Prostate gland (tissue), 2 donors: ENCODE measurements at regions of chr16 and their contacts with region 1.

Region 1: DNA sequence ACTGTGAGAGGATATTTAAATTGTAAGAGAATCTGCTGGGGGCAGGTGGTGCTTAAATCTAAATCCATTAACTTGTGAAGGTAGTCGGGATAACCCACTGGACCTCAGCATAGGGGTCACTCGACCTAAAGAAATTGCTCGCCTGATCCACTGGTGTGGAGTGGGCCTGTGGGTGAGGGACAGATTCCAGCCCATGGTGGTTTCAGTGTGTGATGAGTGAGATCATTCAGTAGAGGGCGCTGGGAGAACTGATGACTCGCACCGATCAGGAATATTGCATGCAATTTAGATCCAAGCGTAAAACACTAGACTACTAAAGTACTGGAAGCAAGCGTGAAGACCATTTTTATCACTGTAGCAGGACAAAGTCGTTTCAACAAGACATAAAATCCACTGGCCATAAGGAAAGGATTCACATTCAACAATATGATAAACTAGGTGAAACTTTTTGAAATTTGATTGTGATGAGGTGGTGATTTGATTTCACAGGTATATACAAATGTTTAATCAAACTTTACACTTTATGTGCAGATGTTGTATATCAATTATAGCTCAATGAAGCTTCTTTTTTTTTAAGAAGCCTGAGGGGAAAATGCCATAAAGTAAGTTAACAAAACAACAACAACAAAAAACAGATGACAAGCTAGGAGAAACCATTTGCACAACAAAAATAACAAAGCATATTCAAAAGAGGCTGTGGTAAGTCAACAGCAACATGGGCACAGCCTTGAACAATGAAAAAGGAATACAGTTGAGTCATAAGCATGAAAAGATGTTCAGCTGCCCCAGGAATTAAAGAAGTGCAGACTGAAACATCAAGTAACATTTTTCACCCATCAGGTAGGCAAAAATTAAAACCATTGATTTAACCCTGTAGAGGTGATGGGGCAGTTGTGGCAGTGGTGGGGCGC is 7.5 kb upstream of the TMEM170A start:
- DNase-seq: peak; percentile 67
- H3K4me3 ChIP-seq: no peak overlapping the region
- H3K27ac ChIP-seq: no peak overlapping the region
- H3K4me1 ChIP-seq: no peaks in the 10 kb centered on the region
- H3K27me3 ChIP-seq: no peaks in the 10 kb centered on the region
- CTCF ChIP-seq: peak; percentile 25 to 81 (median 62)
- POLR2A ChIP-seq: no peak

Region 2: GRCh38 chr16:75305364-75306098 is 166.4 kb before region 1 on chr16:
- intact Hi-C with region 1: no loop called
- DNase-seq: peak; percentile 90
- H3K4me3 ChIP-seq: no peak overlapping the region
- H3K27ac ChIP-seq: peak overlapping the region; percentile 78 to 85
- H3K4me1 ChIP-seq: peaks cover 14% of the 10 kb centered on the region
- H3K27me3 ChIP-seq: no peaks in the 10 kb centered on the region
- CTCF ChIP-seq: no peak
- POLR2A ChIP-seq: no peak

Region 3: DNA sequence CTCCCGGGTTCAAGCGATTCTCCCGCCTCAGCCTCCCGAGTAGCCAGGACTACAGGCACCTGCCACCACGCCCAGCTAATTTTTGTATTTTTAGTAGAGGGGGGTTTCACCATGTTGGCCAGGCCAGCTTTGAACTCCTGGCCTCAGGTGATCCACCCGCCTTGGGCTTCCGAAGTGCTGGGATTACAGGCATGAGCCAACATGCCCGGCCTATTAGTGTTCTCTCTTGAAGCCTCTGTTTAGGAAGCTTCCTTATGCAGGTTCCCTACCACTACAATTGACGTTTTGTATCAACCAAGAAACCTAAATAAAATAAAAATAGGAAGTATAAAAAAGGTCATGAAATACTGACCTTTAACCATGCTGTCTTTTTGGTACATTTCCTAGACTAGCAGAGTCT is 47.9 kb after region 1 on chr16:
- intact Hi-C with region 1: loop called (anchors 5 kb)
- DNase-seq: no peak
- H3K4me3 ChIP-seq: no peak overlapping the region
- H3K27ac ChIP-seq: no peak overlapping the region
- H3K4me1 ChIP-seq: no peaks in the 10 kb centered on the region
- H3K27me3 ChIP-seq: no peaks in the 10 kb centered on the region
- CTCF ChIP-seq: no peak
- POLR2A ChIP-seq: no peak

Region 4: DNA sequence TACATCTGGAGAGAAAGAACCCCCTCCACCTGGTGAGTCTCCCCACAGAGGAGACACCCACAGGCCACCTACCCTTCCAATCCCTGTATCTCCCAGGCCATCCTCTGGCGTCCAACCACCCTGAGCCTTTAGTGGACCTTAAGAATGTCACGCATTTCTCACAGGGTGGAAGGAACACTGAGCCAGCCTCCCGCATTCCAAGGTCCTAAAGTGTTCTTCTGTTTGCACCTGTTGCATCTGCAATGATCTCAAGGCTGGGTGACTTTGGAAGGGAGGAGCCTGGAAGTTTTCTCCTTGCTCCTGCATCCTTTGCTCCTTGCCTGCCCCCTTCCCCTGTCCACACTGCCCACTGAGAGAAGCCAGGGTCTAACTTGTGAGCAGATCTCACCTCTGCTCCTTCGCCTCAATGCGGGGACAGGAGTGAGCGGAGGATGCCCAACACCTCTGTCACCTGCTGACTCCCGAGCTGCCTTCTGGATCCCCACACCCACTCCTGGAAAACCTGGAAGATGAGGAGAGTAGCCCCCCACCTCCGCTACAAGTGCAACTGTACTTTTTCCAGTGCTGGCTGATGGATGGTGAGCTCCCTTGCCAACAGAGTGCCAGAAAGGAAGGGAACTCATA is 60.3 kb after region 1 on chr16:
- intact Hi-C with region 1: no loop called
- DNase-seq: no peak
- H3K4me3 ChIP-seq: no peak overlapping the region
- H3K27ac ChIP-seq: no peak overlapping the region
- H3K4me1 ChIP-seq: no peaks in the 10 kb centered on the region
- H3K27me3 ChIP-seq: no peaks in the 10 kb centered on the region
- CTCF ChIP-seq: no peak
- POLR2A ChIP-seq: no peak

Region 5: DNA sequence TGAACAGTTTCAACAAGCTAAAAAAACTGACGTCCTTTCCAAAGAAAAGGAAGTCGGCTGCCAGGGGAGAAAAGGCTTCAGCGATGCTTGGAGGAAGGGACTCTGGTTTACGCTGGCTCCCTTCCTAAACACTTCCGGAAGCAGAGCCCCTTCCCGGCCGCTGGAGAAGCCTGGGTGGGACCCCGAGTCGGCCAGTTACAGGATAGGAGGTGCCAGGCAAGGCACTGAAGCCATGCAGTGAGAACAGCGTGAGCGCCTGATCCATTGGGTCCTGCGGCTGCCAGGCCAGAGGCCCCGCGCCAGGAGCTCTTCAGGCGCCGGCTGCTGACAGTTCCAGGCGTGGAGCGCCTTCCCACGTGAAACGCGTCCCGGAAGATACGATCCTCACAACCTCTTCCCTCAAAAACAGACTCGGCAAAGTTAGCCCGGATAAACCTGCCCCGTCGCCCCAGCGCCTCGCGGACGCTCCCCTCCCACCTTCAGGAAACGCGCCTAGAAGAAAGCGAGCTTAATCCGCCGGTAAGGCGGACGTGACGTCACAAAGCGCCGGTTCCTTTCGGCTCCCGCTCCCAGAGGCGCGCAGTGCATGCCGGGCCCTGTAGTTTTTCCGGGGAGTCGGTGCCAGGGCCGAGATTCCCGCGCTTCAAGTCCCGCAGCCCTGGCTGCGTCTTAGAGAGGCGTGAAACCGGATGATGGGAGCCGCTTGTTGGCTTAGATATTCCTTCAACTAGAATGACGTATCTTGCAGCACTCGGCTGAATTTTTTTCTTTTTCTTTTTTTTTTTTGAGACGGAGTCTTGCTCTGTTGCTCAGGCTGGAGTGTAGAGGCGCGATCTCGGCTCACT is 151.0 kb after region 1 on chr16 and contains the start of gene ADAT1:
- intact Hi-C with region 1: loop called (anchors 10 kb)
- DNase-seq: peak; percentile 98
- H3K4me3 ChIP-seq: peak within 1 kb of the TSS; percentile 70 to 75
- H3K27ac ChIP-seq: peak within 1 kb of the TSS; percentile 74 to 85
- H3K4me1 ChIP-seq: peaks cover 6% of the 10 kb centered on the region
- H3K27me3 ChIP-seq: no peaks in the 10 kb centered on the region
- CTCF ChIP-seq: peak in 2 of 4 experiments; percentile 18 to 28
- POLR2A ChIP-seq: peak; percentile 89
- total RNA-seq, gene ADAT1: 49.1 to 66.0 TPM

Region 6: GRCh38 chr16:75764154-75764768 is 292.3 kb after region 1 on chr16:
- intact Hi-C with region 1: loop called (anchors 2 kb)
- DNase-seq: peak; percentile 47
- H3K4me3 ChIP-seq: no peak overlapping the region
- H3K27ac ChIP-seq: no peak overlapping the region
- H3K4me1 ChIP-seq: no peaks in the 10 kb centered on the region
- H3K27me3 ChIP-seq: no peaks in the 10 kb centered on the region
- CTCF ChIP-seq: peak; percentile 33 to 84 (median 68)
- POLR2A ChIP-seq: no peak